AG04449 (cell line): ENCODE measurements at regions of chr10 and their contacts with region 1.

Region 1: GRCh38 chr10:101080933-101081931 is 19.4 kb downstream of the KAZALD1 start:
- DNase-seq: no peak
- H3K4me3 ChIP-seq: no peak overlapping the region
- CTCF ChIP-seq: no peak

Region 2: GRCh38 chr10:100621360-100622205 is 459.6 kb before region 1 on chr10:
- CTCF ChIA-PET with region 1: no interaction called
- POLR2A ChIA-PET with region 1: no interaction called
- DNase-seq: no peak
- H3K4me3 ChIP-seq: no peak overlapping the region
- CTCF ChIP-seq: no peak

Region 3: DNA sequence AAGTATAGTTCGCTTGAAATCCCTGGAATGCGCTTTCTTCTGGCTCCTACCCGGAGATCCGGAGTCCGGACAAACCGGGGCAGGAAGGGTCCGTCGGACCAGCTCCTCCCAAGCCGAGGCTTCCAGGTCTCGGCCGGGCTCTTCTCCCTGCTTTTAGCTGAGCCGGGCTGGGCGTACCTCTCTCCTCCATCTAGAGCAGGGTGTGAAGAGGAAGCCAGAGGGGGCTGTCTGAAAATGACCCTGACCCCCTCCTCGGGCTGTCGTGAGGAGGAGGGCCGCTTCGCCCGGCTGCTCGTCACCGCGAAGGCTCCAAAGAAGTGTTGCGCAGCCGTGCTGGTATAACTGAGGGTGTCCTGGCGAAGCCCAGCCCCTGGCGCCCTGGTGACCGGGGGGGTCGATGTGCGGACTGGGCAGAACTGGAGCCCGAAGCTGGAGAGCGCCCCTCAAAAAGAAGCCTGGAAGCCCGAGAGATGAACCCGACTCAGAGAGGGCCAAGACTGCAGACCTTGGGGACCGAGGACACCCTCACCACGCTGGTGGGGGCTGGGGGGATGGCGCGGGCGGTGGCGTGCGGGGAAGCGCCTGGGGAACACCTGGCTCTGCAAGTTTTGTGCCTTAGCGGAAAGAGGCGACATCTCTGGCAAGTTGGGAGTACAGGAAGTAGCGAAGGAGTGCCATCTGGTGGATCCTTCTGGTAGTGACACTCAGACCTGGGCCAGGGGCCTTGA is 13.7 kb before region 1 on chr10:
- CTCF ChIA-PET with region 1: interaction called, 23 read pairs
- POLR2A ChIA-PET with region 1: no interaction called
- DNase-seq: no peak
- H3K4me3 ChIP-seq: peak overlapping the region; percentile 56
- CTCF ChIP-seq: peak; percentile 79

Region 4: DNA sequence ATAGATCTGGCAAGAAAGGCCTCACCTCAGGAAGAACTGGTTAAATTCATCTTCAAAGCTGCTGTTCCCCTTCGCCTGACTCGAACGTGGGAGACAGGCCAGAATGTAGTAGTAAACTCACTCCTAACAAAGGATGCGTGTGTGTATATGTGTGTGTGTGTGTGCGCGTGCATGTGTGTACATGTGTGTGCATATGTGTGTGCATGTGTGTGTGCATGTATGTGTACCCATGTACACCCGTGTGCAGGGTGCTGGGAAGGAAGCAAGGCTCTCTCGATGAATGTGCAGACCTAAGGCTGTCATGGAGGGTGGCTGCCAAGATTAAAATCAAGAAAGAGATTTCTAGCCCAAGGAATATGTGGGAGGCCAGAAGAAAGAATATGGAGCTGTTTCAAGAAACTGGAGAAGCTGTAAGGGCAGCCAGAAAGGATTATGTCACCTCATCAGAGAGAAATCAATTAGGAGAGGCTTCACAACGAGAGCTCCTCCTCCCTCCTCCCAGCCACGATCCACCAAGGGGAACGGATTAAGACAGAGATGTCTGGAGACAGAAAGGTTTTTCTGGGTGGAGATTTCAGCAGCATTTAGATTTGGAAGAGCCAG is 182.0 kb after region 1 on chr10:
- CTCF ChIA-PET with region 1: no interaction called
- POLR2A ChIA-PET with region 1: no interaction called
- DNase-seq: no peak
- H3K4me3 ChIP-seq: no peak overlapping the region
- CTCF ChIP-seq: no peak